IMR-90 (cell line): ENCODE measurements at regions of chr3 and their contacts with region 1.

Region 1: DNA sequence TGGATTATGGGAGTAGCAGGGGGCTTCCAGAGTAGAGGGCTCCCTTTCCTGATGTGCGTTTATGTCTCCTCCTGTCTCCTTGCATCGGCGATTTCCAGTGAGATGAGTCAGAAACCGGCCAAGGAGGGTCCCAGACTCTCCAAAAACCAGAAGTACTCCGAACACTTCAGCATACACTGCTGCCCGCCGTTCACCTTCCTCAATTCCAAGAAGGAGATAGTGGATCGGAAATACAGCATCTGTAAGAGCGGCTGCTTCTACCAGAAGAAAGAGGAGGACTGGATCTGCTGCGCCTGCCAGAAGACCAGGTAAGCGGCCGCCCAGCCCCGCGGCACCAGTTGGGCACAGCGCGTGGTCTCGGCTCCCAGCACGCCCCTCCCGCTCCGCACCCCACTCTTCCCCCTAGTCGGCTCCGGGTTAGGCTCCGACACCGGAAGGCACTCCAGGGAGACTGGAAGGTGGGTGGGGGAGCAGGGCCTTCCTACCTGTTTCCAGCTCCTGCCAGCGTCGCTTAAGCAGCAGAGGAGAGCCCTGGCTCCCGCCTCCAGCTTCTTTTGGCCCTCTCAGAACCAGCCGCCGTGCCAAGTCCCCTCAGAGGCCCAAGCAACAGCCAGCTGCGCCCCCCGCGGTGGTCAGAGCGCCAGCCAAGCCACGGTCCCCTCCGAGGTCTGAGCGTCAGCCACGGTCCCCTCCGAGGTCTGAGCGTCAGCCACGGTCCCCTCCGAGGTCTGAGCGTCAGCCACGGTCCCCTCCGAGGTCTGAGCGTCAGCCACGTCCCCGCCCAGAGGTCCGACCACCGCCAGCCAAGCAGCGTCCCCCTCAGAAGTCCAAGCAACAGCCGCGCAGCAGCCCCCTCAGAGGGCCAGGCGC is 34.7 kb downstream of the MOBP start:
- DNase-seq: no peak
- ATAC-seq: no peak
- H3K4me3 ChIP-seq: no peak overlapping the region
- H3K27ac ChIP-seq: no peak overlapping the region
- H3K4me1 ChIP-seq: no peaks in the 10 kb centered on the region
- H3K27me3 ChIP-seq: peaks cover 16% of the 10 kb centered on the region
- CTCF ChIP-seq: no peak
- POLR2A ChIP-seq: no peak
- RAD21 ChIP-seq: no peak

Region 2: GRCh38 chr3:39414421-39414907 is 87.7 kb before region 1 on chr3:
- CTCF ChIA-PET with region 1: interaction called, 5 read pairs
- POLR2A ChIA-PET with region 1: no interaction called
- dilution Hi-C with region 1: no loop called
- in situ Hi-C with region 1: no loop called
- intact Hi-C with region 1: loop called (anchors 1 kb)
- DNase-seq: no peak
- ATAC-seq: peak; percentile 4; the same call in 1 of the 2 replicates
- H3K4me3 ChIP-seq: no peak overlapping the region
- H3K27ac ChIP-seq: no peak overlapping the region
- H3K4me1 ChIP-seq: no peaks in the 10 kb centered on the region
- H3K27me3 ChIP-seq: no peaks in the 10 kb centered on the region
- CTCF ChIP-seq: no peak
- POLR2A ChIP-seq: no peak; the same call in 1 of the 2 replicates
- RAD21 ChIP-seq: no peak

Region 3: DNA sequence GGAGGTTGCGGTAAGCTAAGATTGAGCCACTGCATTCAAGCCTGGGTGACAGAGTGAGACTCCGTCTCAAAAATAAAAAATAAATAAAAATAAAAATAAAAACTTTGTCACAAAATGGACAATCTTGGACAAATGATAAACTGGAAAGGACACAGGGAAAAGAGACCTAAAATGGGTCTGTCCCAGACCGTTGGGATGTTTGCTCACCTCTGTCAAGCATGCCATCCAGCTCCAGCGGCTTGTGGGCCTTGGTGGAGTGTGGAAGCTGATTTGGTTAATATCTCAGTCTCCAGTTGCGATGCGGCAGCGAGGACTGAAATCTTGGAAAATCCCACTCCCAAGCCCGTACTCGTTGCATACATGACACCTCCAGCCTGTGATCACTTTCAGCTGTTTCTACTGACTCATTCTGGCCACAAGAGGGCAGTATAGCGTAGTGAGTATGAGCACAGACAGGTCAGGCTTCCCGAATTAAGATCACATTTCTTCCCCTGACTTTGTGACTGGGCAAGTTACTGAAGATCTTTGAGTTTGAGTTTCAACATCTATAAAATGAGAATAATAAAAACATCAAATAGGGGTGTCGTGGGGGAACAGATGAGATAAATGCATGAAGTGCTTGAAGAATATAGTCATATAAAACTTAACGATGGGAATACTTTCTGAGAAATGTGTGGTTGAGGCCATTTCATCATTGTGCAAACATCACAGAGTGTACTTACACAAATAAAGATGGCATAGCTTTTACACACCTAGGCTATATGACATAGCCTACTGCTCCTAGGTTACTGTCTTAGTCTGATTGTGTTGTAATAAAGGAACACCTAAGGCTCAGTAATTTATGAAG is 54.3 kb before region 1 on chr3:
- CTCF ChIA-PET with region 1: interaction called, 7 read pairs
- POLR2A ChIA-PET with region 1: no interaction called
- dilution Hi-C with region 1: no loop called
- in situ Hi-C with region 1: loop called (anchors 5 kb)
- intact Hi-C with region 1: loop called (anchors 1 kb)
- DNase-seq: peak; percentile 82
- ATAC-seq: peak; percentile 100
- H3K4me3 ChIP-seq: no peak overlapping the region
- H3K27ac ChIP-seq: no peak overlapping the region
- H3K4me1 ChIP-seq: no peaks in the 10 kb centered on the region
- H3K27me3 ChIP-seq: peaks cover 6% of the 10 kb centered on the region; the same call in 1 of the 2 replicates
- CTCF ChIP-seq: peak; percentile 87
- POLR2A ChIP-seq: no peak
- RAD21 ChIP-seq: peak; percentile 65

Region 4: GRCh38 chr3:39587113-39587512 is 84.9 kb after region 1 on chr3:
- CTCF ChIA-PET with region 1: no interaction called
- POLR2A ChIA-PET with region 1: no interaction called
- dilution Hi-C with region 1: no loop called
- in situ Hi-C with region 1: no loop called
- intact Hi-C with region 1: no loop called
- DNase-seq: no peak
- ATAC-seq: no peak
- H3K4me3 ChIP-seq: no peak overlapping the region
- H3K27ac ChIP-seq: no peak overlapping the region
- H3K4me1 ChIP-seq: no peaks in the 10 kb centered on the region
- H3K27me3 ChIP-seq: no peaks in the 10 kb centered on the region
- CTCF ChIP-seq: no peak
- POLR2A ChIP-seq: no peak
- RAD21 ChIP-seq: no peak